PC-3 (cell line): ENCODE measurements at regions of chr17 and their contacts with region 1.

Region 1: DNA sequence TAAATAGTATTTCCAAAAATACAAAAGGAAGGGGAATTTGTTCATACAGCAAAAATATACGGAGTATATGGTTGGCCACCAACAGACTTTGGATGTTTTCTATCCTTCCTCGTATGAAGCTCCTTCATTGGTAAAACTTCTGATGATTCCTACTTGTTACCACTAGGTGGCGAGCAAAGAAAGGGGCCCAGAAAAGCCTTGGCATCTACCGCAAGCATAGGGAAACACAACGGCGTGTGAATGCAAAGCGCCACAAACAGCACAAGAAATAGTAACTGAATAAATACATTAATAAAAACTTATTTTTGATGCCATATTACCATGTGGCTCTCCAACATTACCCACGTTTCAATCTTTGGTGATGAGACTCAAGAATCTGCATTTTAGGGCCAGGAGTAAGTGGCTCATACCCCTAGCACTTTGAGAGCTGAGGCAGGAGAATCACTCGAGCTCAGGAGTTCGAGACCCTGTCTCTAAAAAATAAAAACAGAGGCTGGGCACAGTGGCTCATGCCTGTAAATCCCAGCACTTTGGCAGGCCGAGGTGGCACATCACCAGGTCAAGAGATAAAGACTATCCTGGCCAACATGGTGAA is 34.5 kb downstream of the YWHAE start:
- DNase-seq: peak; percentile 78
- ATAC-seq: peak; percentile 77
- H3K4me3 ChIP-seq: no peak overlapping the region
- H3K27ac ChIP-seq: no peak overlapping the region
- H3K4me1 ChIP-seq: peaks cover 1% of the 10 kb centered on the region; the same call in 1 of the 2 replicates
- H3K27me3 ChIP-seq: no peaks in the 10 kb centered on the region
- CTCF ChIP-seq: peak; percentile 79

Region 2: GRCh38 chr17:1413281-1413791 is 47.8 kb after region 1 on chr17:
- CTCF ChIA-PET with region 1: no interaction called
- POLR2A ChIA-PET with region 1: interaction called, 13 read pairs
- intact Hi-C with region 1: no loop called
- DNase-seq: peak; percentile 79
- ATAC-seq: peak; percentile 91
- H3K4me3 ChIP-seq: no peak overlapping the region
- H3K27ac ChIP-seq: 0 out of 2 replicates have a peak overlapping the region, but pooled peaks have one; percentile 40
- H3K4me1 ChIP-seq: 0 out of 2 replicates have a peak, but pooled peaks cover 10% of the 10 kb centered on the region
- H3K27me3 ChIP-seq: no peaks in the 10 kb centered on the region
- CTCF ChIP-seq: no peak

Region 3: GRCh38 chr17:1422907-1423306 is 57.4 kb after region 1 on chr17:
- CTCF ChIA-PET with region 1: interaction called, 3 read pairs
- POLR2A ChIA-PET with region 1: no interaction called
- intact Hi-C with region 1: loop called (anchors 10 kb)
- DNase-seq: peak; percentile 89
- ATAC-seq: peak; percentile 98
- H3K4me3 ChIP-seq: no peak overlapping the region; the same call in 1 of the 2 replicates
- H3K27ac ChIP-seq: peak overlapping the region; percentile 71
- H3K4me1 ChIP-seq: peaks cover 17% of the 10 kb centered on the region
- H3K27me3 ChIP-seq: no peaks in the 10 kb centered on the region
- CTCF ChIP-seq: no peak

Region 4: GRCh38 chr17:1455797-1456599 is 90.5 kb after region 1 on chr17 and contains the start of gene CRK:
- CTCF ChIA-PET with region 1: no interaction called
- POLR2A ChIA-PET with region 1: no interaction called
- intact Hi-C with region 1: loop called (anchors 10 kb)
- DNase-seq: peak; percentile 96
- ATAC-seq: peak; percentile 73
- H3K4me3 ChIP-seq: peak within 1 kb of the TSS; percentile 88
- H3K27ac ChIP-seq: peak within 1 kb of the TSS; percentile 68
- H3K4me1 ChIP-seq: peaks cover 13% of the 10 kb centered on the region
- H3K27me3 ChIP-seq: no peaks in the 10 kb centered on the region
- CTCF ChIP-seq: no peak
- total RNA-seq, gene CRK: 41.8 and 49.4 TPM in 2 replicates

Region 5: GRCh38 chr17:1516388-1517161 is 151.0 kb after region 1 on chr17 and contains the start of gene INPP5K:
- CTCF ChIA-PET with region 1: interaction called, 12 read pairs
- POLR2A ChIA-PET with region 1: no interaction called
- intact Hi-C with region 1: loop called (anchors 10 kb)
- DNase-seq: peak; percentile 95
- ATAC-seq: peak; percentile 89
- H3K4me3 ChIP-seq: peak within 1 kb of the TSS; percentile 99
- H3K27ac ChIP-seq: peak within 1 kb of the TSS; percentile 61
- H3K4me1 ChIP-seq: peaks cover 12% of the 10 kb centered on the region
- H3K27me3 ChIP-seq: no peaks in the 10 kb centered on the region
- CTCF ChIP-seq: no peak
- total RNA-seq, gene INPP5K: 46.4 and 52.6 TPM in 2 replicates